SK-N-SH (cell line): ENCODE measurements at regions of chr12 and their contacts with region 1.

Region 1: DNA sequence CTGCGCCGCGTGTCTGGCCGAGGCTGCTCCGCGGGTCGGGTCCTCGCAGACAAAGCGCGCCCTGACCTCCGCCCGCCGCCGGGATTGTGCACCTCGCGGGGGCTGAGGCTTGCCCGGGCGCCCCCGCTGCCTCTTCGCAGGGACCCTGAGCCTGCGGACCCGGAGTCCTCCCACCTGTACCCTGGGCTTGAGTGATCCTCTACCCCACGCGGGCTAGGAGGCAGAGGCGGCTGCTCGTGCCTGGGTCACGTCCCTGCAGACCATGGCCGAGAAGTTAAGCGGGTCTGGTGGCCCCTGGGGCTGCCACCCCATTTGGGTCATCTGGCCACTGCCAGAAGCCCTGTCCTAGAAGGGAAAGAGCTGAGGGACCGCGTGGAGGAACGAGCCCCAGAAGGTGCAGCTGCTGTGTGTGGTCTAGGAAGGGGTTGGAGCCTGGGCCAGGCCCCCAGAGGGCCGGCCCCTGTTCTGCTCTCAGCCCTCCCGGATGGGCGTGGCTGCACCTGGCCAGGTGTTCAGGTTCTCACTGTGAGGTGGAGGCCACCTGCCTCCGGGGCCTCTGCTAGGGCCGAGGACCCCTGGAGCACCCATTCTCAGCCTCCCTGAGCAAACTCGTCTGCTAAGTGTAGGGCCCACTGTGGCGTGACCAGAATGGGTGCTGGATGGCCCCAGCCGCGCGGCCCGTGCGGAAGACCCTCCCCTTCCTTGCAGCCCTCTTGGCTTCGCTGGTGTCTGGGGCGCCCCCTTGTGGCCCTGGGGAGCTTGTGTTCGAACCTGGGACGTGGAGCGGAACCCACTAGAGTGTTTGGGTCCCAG is 49.6 kb downstream of the LRCOL1 start:
- DNase-seq: peak; percentile 96
- H3K4me3 ChIP-seq: peak overlapping the region; percentile 68 to 80
- H3K27ac ChIP-seq: peak overlapping the region in 1 of 2 experiments; percentile 63; a peak in 2 of 4 replicates
- H3K4me1 ChIP-seq: peaks cover 0 to 11% of the 10 kb centered on the region in 2 experiments; a peak in 1 of 4 replicates
- H3K27me3 ChIP-seq: no peaks in the 10 kb centered on the region
- CTCF ChIP-seq: peak; percentile 83
- EP300 ChIP-seq: no peak
- RAD21 ChIP-seq: peak; percentile 56

Region 2: GRCh38 chr12:132367071-132367851 is 193.6 kb before region 1 on chr12:
- CTCF ChIA-PET with region 1: no interaction called
- POLR2A ChIA-PET with region 1: no interaction called
- DNase-seq: no peak
- H3K4me3 ChIP-seq: no peak overlapping the region
- H3K27ac ChIP-seq: no peak overlapping the region
- H3K4me1 ChIP-seq: no peaks in the 10 kb centered on the region
- H3K27me3 ChIP-seq: peaks cover 48% of the 10 kb centered on the region
- CTCF ChIP-seq: no peak
- EP300 ChIP-seq: no peak
- RAD21 ChIP-seq: no peak

Region 3: GRCh38 chr12:132489602-132490239 is 71.1 kb before region 1 on chr12 and contains the start of gene FBRSL1:
- CTCF ChIA-PET with region 1: no interaction called
- POLR2A ChIA-PET with region 1: no interaction called
- DNase-seq: peak; percentile 100
- H3K4me3 ChIP-seq: peak within 1 kb of the TSS; percentile 73 to 76
- H3K27ac ChIP-seq: peak within 1 kb of the TSS in 1 of 2 experiments; percentile 11; a peak in 1 of 4 replicates
- H3K4me1 ChIP-seq: peaks cover 0 to 43% of the 10 kb centered on the region in 2 experiments; a peak in 1 of 4 replicates
- H3K27me3 ChIP-seq: no peaks in the 10 kb centered on the region
- CTCF ChIP-seq: no peak
- EP300 ChIP-seq: no peak
- RAD21 ChIP-seq: no peak
- polyA plus RNA-seq, gene FBRSL1: 3.3 and 5.5 TPM in 2 replicates

Region 4: GRCh38 chr12:132582058-132582420 is 21.2 kb after region 1 on chr12:
- CTCF ChIA-PET with region 1: interaction called, 12 read pairs
- POLR2A ChIA-PET with region 1: no interaction called
- DNase-seq: no peak
- H3K4me3 ChIP-seq: no peak overlapping the region
- H3K27ac ChIP-seq: no peak overlapping the region
- H3K4me1 ChIP-seq: no peaks in the 10 kb centered on the region
- H3K27me3 ChIP-seq: no peaks in the 10 kb centered on the region
- CTCF ChIP-seq: no peak
- EP300 ChIP-seq: no peak
- RAD21 ChIP-seq: no peak

Region 5: DNA sequence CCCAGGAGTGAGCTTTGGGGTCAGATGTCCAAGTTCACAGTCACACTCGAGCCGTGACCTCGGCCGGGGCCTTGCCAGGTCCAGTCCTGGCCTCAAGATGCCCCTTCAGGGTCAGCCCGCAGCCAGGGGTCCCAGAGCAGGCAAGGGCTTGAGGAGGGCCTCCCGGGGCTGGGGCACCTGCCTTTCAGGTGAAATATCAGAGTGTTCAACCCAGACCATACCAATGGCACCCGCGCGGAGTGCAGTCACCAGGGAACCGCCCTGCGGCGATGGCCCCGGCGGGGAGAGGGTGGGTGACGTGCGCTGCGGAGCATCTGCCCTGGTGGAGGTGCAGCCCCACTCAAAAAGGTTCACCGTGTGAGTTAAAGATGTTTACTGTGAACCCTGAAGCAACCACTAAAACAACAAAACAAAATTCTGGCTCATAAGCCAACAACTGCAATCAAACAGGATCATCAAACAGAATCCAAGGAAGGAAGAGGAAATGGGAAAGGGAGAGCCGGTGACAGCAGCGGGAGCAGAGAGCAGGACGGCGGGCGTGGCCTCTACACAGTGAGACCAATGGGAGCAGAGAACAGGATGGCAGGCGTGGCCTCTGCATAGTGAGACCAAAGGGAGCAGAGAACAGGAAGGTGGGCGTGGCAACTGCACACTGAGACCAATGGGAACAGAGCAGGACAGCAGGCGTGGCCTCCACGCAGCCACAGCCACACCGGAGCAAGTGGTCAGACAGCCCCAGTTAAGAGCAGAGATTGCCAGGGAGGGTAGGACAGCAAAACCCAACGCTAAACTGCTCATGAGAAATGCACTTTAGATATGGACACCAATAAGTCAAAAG is 32.9 kb after region 1 on chr12:
- CTCF ChIA-PET with region 1: interaction called, 13 read pairs
- POLR2A ChIA-PET with region 1: no interaction called
- DNase-seq: peak; percentile 93
- H3K4me3 ChIP-seq: peak overlapping the region; percentile 42 to 53
- H3K27ac ChIP-seq: peak overlapping the region in 1 of 2 experiments; percentile 18; a peak in 1 of 4 replicates
- H3K4me1 ChIP-seq: peaks cover 0 to 7% of the 10 kb centered on the region in 2 experiments; a peak in 1 of 4 replicates
- H3K27me3 ChIP-seq: no peaks in the 10 kb centered on the region
- CTCF ChIP-seq: no peak
- EP300 ChIP-seq: no peak
- RAD21 ChIP-seq: no peak

Region 6: GRCh38 chr12:132664206-132665148 is 103.7 kb after region 1 on chr12:
- CTCF ChIA-PET with region 1: no interaction called
- POLR2A ChIA-PET with region 1: no interaction called
- DNase-seq: no peak
- H3K4me3 ChIP-seq: no peak overlapping the region
- H3K27ac ChIP-seq: no peak overlapping the region
- H3K4me1 ChIP-seq: no peaks in the 10 kb centered on the region
- H3K27me3 ChIP-seq: no peaks in the 10 kb centered on the region
- CTCF ChIP-seq: no peak
- EP300 ChIP-seq: no peak
- RAD21 ChIP-seq: no peak